ENCODE measurements at regions of chr12 and their contacts with region 1.

Region 1: GRCh38 chr12:21894792-21895595 is 46.2 kb downstream of the ABCC9 start:
- DNase-seq: peak; percentile 45
- ATAC-seq: peak; percentile 60
- H3K4me3 ChIP-seq: no peak overlapping the region
- H3K27ac ChIP-seq: no peak overlapping the region
- H3K4me1 ChIP-seq: no peaks in the 10 kb centered on the region
- H3K27me3 ChIP-seq: no peaks in the 10 kb centered on the region
- CTCF ChIP-seq: no peak
- POLR2A ChIP-seq: no peak
- RAD21 ChIP-seq: no peak

Region 2: DNA sequence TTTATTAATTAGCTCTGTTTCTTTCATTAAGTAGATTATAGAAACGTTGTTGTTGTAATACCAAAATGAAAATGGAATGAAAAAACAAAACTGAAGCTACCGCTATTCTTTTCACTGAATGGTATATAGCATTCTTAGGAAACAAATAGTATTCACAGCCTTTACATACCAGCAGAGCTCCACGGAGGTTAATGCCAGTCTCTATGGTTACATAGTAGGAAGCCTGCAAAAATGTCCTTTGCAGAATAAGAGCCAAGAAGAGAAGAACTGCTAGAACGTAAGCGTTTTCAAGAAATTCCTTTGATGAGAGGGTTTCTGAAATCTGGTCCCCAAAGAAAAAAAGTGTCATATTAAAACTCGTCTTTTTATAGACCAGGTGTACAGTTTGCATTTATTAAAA is 15.7 kb after region 1 on chr12:
- CTCF ChIA-PET with region 1: no interaction called
- POLR2A ChIA-PET with region 1: no interaction called
- dilution Hi-C with region 1: no loop called
- in situ Hi-C with region 1: no loop called
- intact Hi-C with region 1: loop called (anchors 1 kb)
- DNase-seq: no peak
- ATAC-seq: no peak
- H3K4me3 ChIP-seq: no peak overlapping the region
- H3K27ac ChIP-seq: no peak overlapping the region
- H3K4me1 ChIP-seq: no peaks in the 10 kb centered on the region
- H3K27me3 ChIP-seq: no peaks in the 10 kb centered on the region
- CTCF ChIP-seq: no peak
- POLR2A ChIP-seq: no peak
- RAD21 ChIP-seq: no peak

Region 3: DNA sequence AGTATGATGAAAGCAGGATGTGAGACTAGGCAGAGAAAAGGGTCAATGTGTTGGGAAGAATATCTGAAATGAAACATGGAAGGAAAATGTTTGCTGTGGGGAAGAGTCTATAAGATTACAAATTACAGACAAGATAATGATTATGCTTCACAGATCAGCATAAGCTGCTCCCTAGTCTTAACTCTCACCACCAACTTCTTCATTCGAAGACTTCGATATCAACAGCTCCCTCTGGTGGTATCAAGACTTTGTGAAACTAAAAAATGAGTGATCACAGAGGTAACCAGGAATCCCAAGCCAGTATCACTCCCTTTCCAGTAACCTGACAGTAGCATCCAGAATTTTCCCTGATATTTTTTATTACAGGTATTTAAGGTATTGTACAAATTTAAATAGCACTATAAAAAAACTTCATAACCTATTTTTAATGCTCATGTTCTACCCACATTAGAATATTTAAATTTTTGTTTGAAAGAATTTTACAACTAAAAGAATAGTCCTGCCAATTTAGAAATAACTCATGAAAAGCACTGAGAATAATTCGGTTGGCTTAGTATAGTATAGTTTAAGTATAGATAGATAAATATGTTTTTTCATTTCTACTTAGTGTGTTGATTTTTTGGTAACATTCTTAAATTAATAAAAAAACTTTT is 565.0 kb after region 1 on chr12:
- CTCF ChIA-PET with region 1: no interaction called
- POLR2A ChIA-PET with region 1: no interaction called
- dilution Hi-C with region 1: no loop called
- in situ Hi-C with region 1: no loop called
- intact Hi-C with region 1: no loop called
- DNase-seq: peak; percentile 54
- ATAC-seq: peak; percentile 79
- H3K4me3 ChIP-seq: no peak overlapping the region
- H3K27ac ChIP-seq: no peak overlapping the region
- H3K4me1 ChIP-seq: no peaks in the 10 kb centered on the region
- H3K27me3 ChIP-seq: no peaks in the 10 kb centered on the region
- CTCF ChIP-seq: peak; percentile 60
- POLR2A ChIP-seq: no peak
- RAD21 ChIP-seq: peak; percentile 38

Measured in IMR-90 (cell line).